ENCODE measurements at regions of chr7 and their contacts with region 1.

Region 1: GRCh38 chr7:56009695-56010094 is 41.5 kb downstream of the PSPH start:
- DNase-seq: peak; percentile 15

Region 2: DNA sequence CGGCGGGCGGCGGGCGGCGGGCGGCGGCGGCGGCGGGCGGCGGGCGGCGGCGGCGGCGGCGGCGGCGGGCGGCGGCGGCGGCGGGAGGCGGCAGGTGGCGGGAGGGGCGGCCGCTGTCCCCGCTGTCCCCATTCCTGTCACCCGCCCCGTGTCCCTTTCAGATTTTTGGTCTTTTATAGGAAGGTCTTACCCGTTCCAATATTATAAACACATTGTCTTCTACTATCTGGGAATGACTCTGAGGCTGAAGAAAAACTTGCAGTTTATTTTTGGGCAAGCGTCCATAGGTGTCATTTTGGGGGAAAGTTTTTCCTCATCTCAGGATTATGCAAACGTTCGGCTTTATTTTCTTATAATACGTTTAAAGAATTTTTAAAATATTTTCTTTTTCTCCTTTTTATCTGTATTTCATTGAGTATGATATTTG is 121.9 kb before region 1 on chr7:
- intact Hi-C with region 1: no loop called
- DNase-seq: no peak

Region 3: GRCh38 chr7:56063882-56064625 is 54.4 kb after region 1 on chr7 and contains the start of gene SUMF2:
- intact Hi-C with region 1: loop called in 1 of 2 experiments (anchors 2 kb)
- DNase-seq: peak; percentile 97
- total RNA-seq, gene SUMF2: 84.6 to 129 TPM

Measured in posterior vena cava (tissue), 2 donors.